ENCODE measurements at regions of chrX and their contacts with region 1.

Region 1: DNA sequence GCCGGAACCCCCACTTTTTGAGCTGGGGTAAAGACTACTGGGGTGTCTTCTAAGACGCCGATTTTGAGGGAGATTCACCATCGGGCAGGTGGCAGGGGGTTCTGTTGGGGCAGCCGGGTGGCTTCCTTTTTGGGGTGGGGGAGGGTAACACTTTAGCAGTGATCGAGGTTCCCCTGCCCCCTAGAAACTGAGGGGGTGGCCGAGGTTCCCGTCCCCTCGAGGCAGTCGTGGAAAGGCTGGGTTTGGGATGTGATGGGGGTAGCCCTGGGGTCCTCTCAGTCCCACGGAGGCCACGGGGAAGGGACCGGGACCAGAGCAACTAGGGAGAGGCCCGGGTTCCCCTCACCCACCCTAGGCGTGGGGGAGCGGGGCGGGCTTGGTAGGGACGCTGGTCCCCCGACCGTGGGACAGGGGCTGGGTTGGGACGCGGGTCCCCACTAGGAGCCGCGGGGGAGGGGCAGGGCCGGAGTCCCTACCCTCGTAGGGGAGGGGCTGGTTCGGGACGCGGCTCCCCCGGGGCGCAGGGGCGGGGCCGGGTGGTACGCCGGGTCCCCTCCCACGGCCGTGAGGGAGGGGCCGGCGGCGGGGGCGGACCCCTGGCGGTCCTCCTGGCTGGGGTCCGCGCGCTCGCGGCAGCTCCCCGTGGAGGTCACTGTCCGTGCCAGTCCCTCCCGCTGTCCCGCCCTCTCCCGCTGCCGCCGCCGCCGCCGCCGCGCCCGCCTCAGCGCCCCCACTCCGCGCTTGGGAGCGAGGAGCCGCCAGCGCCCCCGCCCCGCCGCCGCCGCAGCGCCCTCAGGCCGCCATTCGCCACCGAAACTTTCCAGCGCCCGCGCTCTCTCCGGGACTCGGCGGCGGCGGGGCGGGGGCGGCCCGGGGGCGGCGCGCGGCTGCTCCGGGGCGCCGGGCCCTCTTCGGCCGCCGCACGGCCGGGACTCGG is at the start of gene TBL1X:
- DNase-seq: peak; percentile 80
- ATAC-seq: peak; percentile 71
- total RNA-seq, gene TBL1X: 10.6 TPM

Region 2: DNA sequence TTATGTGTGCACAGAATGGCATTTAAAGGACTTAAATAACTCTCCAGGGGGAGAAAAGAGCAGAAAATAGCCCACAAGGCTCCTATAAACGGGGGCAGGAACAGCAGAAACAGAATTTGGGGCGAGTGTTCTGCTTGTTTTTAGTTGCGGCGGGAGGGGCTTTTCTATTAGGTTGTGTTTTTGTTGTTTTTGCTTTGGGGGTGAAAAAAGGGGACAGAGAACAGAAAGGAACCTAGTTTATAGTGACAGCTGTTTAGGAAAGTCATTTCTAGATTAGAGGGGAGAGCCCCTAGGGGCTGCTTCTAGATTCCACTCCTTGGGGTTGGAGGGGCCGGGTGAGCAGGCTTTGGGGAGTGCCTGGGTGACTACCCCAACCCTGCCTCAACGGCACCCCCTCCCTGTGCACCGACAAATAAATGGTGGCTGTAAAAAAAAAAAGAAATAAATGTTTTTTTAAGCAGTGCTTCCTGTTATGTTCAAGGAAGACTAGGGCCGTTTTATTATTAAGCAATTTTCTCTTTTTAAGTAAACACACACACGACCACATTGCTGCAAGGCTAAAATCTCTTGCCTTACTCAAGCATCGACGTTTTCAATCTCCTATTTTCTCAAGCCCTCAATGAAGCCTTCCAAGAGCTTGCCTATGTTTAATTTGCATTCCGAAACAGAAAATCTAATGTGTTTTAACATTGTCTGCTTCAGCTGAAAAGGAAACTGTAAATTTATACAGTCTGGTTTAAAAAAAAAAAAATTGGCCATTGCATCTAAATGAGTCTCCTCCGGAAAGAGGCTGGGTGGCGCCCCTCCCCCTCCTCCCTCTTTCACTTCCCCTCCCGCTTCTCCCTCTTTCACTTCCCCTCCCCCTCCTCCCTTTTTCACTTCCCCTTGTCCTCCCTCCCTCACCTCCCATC is 123.2 kb before region 1 on chrX:
- intact Hi-C with region 1: loop called (anchors 1 kb)
- DNase-seq: peak; percentile 85
- ATAC-seq: peak; percentile 9

Region 3: GRCh38 chrX:9530848-9531274 is 66.2 kb after region 1 on chrX:
- intact Hi-C with region 1: loop called (anchors 1 kb)
- DNase-seq: peak; percentile 86
- ATAC-seq: peak; percentile 90

Region 4: DNA sequence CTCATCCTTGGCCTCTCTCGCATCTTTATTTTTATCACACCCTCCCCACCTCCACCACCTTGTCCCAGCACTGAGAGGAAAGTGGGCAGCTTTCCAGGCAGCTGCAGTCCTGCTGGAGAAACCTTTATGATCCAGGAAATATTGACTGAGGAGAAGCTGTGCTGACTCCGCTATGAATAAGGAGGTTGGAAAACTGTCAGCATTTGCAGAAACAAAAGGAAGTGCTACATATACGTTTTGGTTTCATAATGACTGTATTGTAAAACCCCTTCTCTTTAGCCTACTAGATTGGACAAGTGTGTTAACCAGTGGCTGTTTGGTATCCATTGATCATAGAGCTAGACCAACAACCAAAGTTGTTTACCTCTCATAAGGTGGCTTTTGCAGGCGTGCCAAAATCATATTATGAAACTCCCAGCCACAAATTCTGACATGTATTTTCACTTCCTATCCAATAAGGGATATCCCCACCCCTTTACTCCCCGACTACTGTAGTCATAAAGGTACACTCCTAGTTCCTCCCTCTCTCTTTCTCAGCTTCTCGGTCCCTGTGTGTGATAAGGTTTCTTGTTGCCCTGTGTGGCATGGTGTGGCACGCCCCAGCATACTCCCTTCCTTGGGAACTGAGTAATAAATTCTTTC is 212.5 kb after region 1 on chrX:
- intact Hi-C with region 1: loop called (anchors 10 kb)
- DNase-seq: no peak
- ATAC-seq: peak; percentile 39